Natural killer cell (primary cell): ENCODE measurements at regions of chr19 and their contacts with region 1.

Region 1: DNA sequence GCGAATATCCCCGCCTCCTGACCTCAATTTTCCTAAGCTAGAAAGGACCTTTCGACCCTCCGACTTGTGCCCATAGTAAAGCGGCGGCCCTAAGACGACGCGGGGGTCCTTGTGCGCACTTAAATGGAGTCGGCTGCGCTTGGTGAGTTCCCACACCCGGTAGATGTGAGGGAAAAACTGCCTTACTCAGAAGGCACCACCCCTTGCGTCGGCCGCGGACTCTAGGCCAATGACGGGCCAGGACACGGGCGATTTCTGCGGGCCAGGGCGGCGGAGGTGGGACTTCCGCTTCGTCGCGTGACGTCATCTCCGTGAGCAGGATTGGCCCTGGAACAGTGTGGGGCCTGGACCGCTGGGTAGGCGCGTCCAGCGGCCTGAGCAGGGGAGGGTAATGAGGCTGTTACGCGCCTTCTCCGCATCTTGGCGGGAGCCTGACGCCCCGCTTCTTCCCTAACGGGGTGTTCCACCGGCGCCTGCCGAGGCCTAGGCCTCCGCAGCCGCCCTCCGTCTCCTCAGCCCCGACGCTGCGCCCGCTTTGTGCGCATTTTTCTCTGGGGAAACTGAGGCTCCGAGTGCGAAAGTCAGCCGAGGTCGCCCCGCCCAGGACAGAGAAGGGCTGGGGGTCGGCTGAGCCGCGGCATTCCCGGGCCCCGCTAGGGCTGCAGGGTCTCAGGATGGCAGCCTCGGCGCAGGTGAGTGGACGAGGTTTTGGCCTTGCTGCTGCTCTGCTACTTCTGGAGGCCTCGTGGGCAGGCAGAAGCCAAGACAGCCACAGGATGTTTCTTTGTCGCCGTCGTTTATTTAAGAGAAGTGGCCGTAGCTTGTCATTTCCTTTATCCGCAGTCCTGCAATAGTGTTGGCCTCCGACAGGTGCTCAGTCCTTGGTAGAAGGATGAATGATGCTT is at the start of gene ZNF543:
- DNase-seq: peak; percentile 94 to 96
- ATAC-seq: peak; percentile 95 to 99 (median 98)
- H3K4me3 ChIP-seq: peak within 1 kb of the TSS; percentile 81
- H3K4me3 Mint-ChIP-seq: peak within 1 kb of the TSS; percentile 94
- H3K27ac ChIP-seq: peak within 1 kb of the TSS; percentile 94
- H3K27ac Mint-ChIP-seq: peak within 1 kb of the TSS; percentile 95 to 99
- H3K4me1 ChIP-seq: peaks cover 24% of the 10 kb centered on the region
- H3K4me1 Mint-ChIP-seq: peaks cover 27 to 35% of the 10 kb centered on the region in 2 donors
- H3K27me3 ChIP-seq: peaks cover 13% of the 10 kb centered on the region
- H3K27me3 Mint-ChIP-seq: peaks cover 26% of the 10 kb centered on the region in 2 donors
- CTCF ChIP-seq: no peak
- total RNA-seq, gene ZNF543: 4.7 to 7.2 (median 5.9) TPM

Region 2: DNA sequence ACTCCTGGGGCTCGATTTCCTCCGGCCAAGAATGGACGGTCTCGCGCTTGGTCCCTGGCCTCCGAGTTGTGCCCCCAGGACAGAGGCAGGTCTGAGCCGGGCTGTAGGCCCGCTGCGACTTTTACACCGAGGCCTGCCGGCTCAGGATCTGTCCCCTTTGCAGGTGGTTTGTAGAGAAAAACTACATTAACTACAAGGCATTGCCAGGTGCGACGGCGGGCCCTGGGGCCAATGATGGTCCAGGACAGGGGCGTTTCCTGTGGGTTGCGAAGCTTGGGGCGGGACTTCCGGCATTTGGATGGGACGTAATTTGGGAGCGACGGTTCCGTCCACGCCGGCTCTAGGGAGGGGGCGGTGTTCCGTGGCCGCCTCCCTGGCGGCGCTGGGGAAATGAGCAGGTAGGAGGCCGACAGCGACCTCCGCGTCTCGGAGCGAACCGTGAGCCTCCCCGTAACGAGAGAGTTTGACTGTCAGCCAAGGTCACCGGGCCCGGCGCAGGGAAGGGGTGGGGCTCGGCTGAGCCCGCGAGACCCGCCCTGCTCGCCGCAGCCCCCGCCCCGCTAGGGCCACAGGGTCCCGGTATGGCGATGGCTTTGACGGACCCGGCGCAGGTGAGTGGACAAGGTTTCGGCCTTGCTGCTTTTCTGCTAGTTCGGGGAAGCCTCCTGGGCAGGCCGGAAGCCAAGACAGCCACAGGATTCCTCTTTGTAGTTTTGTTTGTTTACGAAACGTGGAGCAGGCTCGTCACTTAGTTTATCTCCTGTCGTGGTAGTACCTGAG is 79.9 kb before region 1 on chr19 and contains the start of gene ZNF805:
- intact Hi-C with region 1: loop called (anchors 1 kb)
- DNase-seq: peak; percentile 89 to 98
- ATAC-seq: peak; percentile 92 to 97 (median 94)
- H3K4me3 ChIP-seq: peak within 1 kb of the TSS; percentile 78
- H3K4me3 Mint-ChIP-seq: peak within 1 kb of the TSS; percentile 95
- H3K27ac ChIP-seq: peak within 1 kb of the TSS; percentile 87
- H3K27ac Mint-ChIP-seq: peak within 1 kb of the TSS; percentile 94 to 96
- H3K4me1 ChIP-seq: peaks cover 22% of the 10 kb centered on the region
- H3K4me1 Mint-ChIP-seq: peaks cover 29 to 34% of the 10 kb centered on the region in 2 donors
- H3K27me3 ChIP-seq: no peaks in the 10 kb centered on the region
- H3K27me3 Mint-ChIP-seq: no peaks in the 10 kb centered on the region
- CTCF ChIP-seq: no peak
- total RNA-seq, gene ZNF805: 25.9 to 32.7 (median 31.0) TPM